Calu3 (cell line): ENCODE measurements at regions of chr2 and their contacts with region 1.

Region 1: DNA sequence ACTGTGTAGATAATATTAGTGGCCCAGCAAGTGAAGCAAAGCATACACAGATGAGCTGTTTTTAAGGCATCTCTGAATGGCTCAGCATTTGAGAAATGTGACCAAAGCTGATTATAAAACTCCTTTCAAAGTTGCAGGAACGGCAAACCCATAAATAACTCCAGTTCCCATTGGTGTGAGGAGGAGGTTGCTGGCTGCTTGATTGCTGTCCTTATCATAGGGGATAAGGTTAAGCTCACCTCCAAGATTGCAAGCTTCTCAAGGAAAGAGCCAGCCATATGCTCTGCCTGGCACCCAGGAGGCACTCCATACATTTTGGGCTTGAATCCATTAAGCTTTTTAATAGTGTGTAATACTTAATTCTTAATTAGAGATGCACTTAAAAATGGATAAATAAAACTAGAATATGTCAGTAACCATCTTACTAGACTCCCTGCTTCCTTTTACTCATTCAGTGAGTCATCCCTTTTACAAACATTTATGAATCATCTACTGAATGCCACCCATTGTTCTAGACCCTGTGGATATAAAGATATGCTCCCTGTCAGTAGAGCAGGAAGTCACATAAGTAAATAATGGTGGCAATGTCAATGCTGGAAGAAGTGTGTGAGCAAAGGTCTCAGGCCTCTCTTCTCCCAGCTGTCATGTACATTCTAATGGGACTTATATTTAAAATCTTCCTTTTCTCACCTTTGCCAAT is 99.3 kb downstream of the SPATS2L start:
- DNase-seq: peak; percentile 58
- H3K4me3 Mint-ChIP-seq: peak overlapping the region; percentile 61
- H3K27ac Mint-ChIP-seq: peak overlapping the region; percentile 85
- H3K4me1 Mint-ChIP-seq: peaks cover 87% of the 10 kb centered on the region
- H3K27me3 Mint-ChIP-seq: no peaks in the 10 kb centered on the region
- CTCF ChIP-seq: no peak

Region 2: DNA sequence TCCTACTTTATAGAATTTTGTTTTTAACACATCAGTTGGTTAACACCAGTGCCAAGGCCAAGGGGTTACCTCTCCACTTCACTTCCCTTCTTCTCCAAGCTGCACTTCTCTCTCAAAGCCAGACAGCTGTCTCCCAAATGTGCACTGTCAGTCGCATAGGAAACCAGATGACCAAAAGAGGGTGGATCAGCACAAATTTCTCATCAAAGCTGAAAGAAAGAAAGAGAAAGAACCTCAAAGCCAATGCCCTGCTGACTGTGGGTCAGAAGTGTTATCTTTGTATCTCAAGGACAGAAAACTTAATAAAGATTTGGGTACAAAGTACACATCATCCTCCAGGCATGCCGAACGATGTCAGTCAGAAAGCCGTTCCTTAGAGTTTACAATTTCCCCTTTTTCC is 67.0 kb before region 1 on chr2:
- CTCF ChIA-PET with region 1: no interaction called
- intact Hi-C with region 1: loop called (anchors 2 kb)
- DNase-seq: no peak
- H3K4me3 Mint-ChIP-seq: no peak overlapping the region
- H3K27ac Mint-ChIP-seq: no peak overlapping the region
- H3K4me1 Mint-ChIP-seq: peaks cover 70% of the 10 kb centered on the region
- H3K27me3 Mint-ChIP-seq: no peaks in the 10 kb centered on the region
- CTCF ChIP-seq: no peak

Region 3: GRCh38 chr2:200603982-200604381 is 198.2 kb after region 1 on chr2:
- CTCF ChIA-PET with region 1: no interaction called
- intact Hi-C with region 1: no loop called
- DNase-seq: no peak
- H3K4me3 Mint-ChIP-seq: no peak overlapping the region
- H3K27ac Mint-ChIP-seq: no peak overlapping the region
- H3K4me1 Mint-ChIP-seq: peaks cover 23% of the 10 kb centered on the region
- H3K27me3 Mint-ChIP-seq: no peaks in the 10 kb centered on the region
- CTCF ChIP-seq: no peak